AG04450 (cell line): ENCODE measurements at regions of chr5 and their contacts with region 1.

Region 1: GRCh38 chr5:171342362-171343111 is 33.5 kb downstream of the TLX3 start:
- DNase-seq: peak; percentile 32
- H3K4me3 ChIP-seq: no peak overlapping the region
- H3K27ac ChIP-seq: no peak overlapping the region
- H3K27me3 ChIP-seq: peaks cover 7% of the 10 kb centered on the region
- CTCF ChIP-seq: peak; percentile 76

Region 2: DNA sequence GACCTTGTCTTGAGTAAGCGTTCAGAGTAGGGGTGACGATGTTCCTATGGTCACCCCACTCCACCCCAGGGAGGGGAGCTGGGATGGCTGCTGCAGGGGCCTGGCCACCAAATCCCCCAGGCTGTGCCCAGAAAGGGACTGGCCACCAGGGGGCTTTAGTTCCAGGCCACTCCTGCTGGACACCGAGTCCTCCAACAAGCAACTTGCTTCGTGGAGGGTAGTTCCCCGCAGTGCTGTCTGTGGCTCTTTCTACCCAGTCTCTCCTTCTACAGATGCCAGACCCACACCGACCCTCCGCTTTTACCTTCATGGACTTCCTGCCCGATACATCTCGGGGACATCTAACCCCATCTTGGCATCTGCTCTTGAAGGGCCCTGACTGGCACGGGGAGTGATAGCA is 594.7 kb before region 1 on chr5:
- CTCF ChIA-PET with region 1: interaction called, 21 read pairs
- POLR2A ChIA-PET with region 1: no interaction called
- DNase-seq: no peak
- H3K4me3 ChIP-seq: no peak overlapping the region
- H3K27ac ChIP-seq: no peak overlapping the region
- H3K27me3 ChIP-seq: peaks cover 18% of the 10 kb centered on the region
- CTCF ChIP-seq: peak; percentile 46

Region 3: GRCh38 chr5:170809551-170809950 is 533.0 kb before region 1 on chr5:
- CTCF ChIA-PET with region 1: interaction called, 26 read pairs
- POLR2A ChIA-PET with region 1: no interaction called
- DNase-seq: peak; percentile 27
- H3K4me3 ChIP-seq: no peak overlapping the region
- H3K27ac ChIP-seq: no peak overlapping the region
- H3K27me3 ChIP-seq: no peaks in the 10 kb centered on the region
- CTCF ChIP-seq: peak; percentile 57

Region 4: DNA sequence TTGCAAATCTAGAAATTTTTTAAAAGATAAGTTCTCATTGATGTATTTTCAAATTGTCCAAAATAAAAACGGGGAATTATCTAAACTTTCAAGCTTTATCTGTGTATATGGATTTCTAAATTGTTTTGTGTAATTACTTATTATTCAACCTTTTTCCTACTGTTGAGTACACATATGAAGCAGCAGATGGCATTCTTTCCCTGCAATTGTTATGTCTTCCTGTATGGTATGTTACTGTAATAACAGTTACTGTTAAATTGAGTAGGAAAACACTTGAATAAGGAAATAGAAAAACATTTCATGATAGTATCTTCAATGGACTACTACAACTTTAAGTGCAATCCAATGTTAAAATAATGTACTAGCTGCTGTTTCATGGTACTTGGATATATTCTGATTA is 355.9 kb before region 1 on chr5:
- CTCF ChIA-PET with region 1: interaction called, 14 read pairs
- POLR2A ChIA-PET with region 1: no interaction called
- DNase-seq: no peak
- H3K4me3 ChIP-seq: no peak overlapping the region
- H3K27ac ChIP-seq: no peak overlapping the region
- H3K27me3 ChIP-seq: no peaks in the 10 kb centered on the region
- CTCF ChIP-seq: peak; percentile 18; the same call in 1 of the 2 replicates

Region 5: GRCh38 chr5:171050916-171051315 is 291.6 kb before region 1 on chr5:
- CTCF ChIA-PET with region 1: no interaction called
- POLR2A ChIA-PET with region 1: no interaction called
- DNase-seq: no peak
- H3K4me3 ChIP-seq: no peak overlapping the region
- H3K27ac ChIP-seq: no peak overlapping the region
- H3K27me3 ChIP-seq: no peaks in the 10 kb centered on the region
- CTCF ChIP-seq: no peak

Region 6: DNA sequence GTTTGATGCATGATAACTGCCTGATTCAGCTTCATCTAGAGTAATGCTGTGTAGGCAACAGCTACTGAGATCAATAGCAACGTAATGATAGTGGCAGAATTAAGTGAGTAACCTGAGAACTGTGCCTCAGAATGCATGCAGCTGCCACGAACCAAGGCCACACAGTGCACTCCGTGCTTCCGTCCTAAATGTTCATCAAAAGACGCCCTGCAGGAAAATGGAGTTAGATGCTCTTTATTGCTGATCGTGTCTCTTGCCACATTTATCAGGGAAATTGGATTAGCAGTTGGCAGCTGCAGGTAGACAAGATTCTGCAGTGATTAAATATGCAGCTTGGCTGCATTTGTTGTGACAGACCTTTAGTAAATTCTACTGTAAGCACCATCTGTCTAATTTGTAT is 141.2 kb before region 1 on chr5:
- CTCF ChIA-PET with region 1: interaction called, 387 read pairs
- POLR2A ChIA-PET with region 1: no interaction called
- DNase-seq: no peak
- H3K4me3 ChIP-seq: no peak overlapping the region
- H3K27ac ChIP-seq: no peak overlapping the region
- H3K27me3 ChIP-seq: no peaks in the 10 kb centered on the region
- CTCF ChIP-seq: no peak

Region 7: DNA sequence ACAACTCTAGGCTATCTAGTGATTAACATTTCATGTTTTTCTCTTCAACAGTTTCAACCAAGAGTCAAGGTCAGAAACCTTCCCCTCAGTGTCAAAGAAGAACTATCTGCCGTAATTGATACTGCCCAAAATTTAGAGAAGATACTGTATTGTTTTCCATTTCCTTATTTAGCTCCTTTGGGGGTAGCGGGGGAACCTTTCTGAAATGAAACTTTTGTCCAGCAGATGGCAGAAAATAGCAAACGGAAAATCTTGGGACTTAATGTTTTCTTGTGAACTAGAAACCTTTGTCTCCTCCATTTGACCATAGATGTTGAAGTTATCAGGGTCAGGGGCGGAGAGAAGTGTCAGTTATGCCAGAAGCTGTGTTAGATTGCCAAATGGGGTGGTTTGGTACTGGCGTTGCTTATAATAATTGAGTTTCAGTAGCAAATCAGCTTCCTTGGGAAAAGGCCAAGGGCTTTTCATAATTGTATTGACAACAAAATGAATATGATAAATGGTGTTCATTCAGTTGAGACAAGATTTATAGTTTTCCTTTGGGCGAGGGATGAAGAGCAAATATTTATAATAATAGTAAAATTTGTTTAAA is 135.2 kb before region 1 on chr5:
- CTCF ChIA-PET with region 1: interaction called, 387 read pairs
- POLR2A ChIA-PET with region 1: no interaction called
- DNase-seq: peak; percentile 6
- H3K4me3 ChIP-seq: no peak overlapping the region
- H3K27ac ChIP-seq: no peak overlapping the region
- H3K27me3 ChIP-seq: no peaks in the 10 kb centered on the region
- CTCF ChIP-seq: peak; percentile 70

Region 8: DNA sequence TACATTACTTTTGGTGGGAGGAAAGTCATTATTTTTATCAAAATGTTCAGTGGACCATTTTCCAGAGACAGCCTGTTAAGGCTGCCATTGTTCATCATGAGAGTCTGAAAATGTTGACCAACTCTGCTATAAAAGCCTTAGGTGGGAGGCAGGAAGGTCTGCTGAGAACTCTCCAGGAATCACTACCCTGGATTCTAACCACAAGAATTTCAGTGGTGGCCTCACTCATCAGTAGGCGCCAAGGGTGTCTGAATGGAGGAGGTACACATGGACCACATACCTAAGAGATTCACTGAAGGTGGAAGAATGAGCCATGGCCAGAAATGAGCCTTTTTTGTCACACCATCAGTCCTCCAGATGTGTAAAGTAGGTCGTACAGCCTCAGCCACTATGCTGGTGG is 54.5 kb before region 1 on chr5:
- CTCF ChIA-PET with region 1: no interaction called
- POLR2A ChIA-PET with region 1: no interaction called
- DNase-seq: no peak
- H3K4me3 ChIP-seq: no peak overlapping the region
- H3K27ac ChIP-seq: no peak overlapping the region
- H3K27me3 ChIP-seq: no peaks in the 10 kb centered on the region
- CTCF ChIP-seq: no peak

Region 9: DNA sequence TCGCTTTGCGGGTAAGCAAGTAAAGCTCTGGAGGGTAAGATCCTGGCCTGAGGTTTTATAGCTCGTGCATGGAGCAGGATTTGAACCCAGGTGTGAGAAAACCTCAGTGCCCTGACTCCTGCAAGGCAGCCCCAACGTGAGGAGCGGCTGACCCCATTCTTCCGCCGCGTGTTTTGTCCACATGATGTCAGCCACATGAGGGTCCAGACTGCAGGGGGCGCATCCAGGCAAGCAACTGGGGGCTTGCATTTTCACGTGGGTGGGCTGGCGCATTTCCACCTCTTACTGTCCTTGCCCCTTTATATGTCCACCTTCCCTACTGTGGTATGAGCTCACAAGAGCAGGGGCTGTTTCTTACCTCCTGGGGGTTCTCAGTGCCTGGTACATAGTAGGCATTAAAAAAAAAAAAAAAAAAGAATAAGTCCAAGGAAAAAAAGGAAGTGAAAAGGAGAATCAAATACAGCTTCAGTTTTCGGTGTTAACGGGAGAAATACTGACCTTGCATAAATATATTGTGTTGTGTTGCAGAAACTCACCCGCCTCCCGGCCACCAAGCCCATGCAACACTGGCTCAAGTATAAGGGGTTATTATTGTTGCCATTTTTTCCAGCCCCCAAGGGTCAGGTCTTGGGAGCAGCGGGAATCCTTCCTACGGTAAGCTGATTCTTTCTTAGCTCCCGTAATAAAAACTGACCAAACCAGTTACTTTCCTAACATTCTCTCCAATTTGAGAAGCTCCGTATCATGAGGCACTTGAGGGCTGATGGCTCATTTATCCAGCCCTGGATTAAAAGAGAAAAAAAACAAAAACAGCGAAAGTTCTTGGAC is 18.5 kb before region 1 on chr5:
- CTCF ChIA-PET with region 1: interaction called, 11 read pairs
- POLR2A ChIA-PET with region 1: no interaction called
- DNase-seq: no peak
- H3K4me3 ChIP-seq: no peak overlapping the region
- H3K27ac ChIP-seq: no peak overlapping the region
- H3K27me3 ChIP-seq: peaks cover 67% of the 10 kb centered on the region
- CTCF ChIP-seq: no peak